Pancreas (tissue), 10 donors: ENCODE measurements at regions of chr5 and their contacts with region 1.

Region 1: GRCh38 chr5:124661317-124662141 is 84.9 kb downstream of the ZNF608 start:
- DNase-seq: peak in 4 of 6 donors; percentile 36 to 64 (median 50)
- ATAC-seq: peak; percentile 83 to 92 (median 86)
- H3K4me3 ChIP-seq: peak overlapping the region in 1 of 4 donors; percentile 3
- H3K27ac ChIP-seq: peak overlapping the region; percentile 41 to 85 (median 72)
- H3K4me1 ChIP-seq: peaks cover 55 to 76% (median 62%) of the 10 kb centered on the region in 3 donors
- H3K27me3 ChIP-seq: no peaks in the 10 kb centered on the region
- CTCF ChIP-seq: no peak

Region 2: DNA sequence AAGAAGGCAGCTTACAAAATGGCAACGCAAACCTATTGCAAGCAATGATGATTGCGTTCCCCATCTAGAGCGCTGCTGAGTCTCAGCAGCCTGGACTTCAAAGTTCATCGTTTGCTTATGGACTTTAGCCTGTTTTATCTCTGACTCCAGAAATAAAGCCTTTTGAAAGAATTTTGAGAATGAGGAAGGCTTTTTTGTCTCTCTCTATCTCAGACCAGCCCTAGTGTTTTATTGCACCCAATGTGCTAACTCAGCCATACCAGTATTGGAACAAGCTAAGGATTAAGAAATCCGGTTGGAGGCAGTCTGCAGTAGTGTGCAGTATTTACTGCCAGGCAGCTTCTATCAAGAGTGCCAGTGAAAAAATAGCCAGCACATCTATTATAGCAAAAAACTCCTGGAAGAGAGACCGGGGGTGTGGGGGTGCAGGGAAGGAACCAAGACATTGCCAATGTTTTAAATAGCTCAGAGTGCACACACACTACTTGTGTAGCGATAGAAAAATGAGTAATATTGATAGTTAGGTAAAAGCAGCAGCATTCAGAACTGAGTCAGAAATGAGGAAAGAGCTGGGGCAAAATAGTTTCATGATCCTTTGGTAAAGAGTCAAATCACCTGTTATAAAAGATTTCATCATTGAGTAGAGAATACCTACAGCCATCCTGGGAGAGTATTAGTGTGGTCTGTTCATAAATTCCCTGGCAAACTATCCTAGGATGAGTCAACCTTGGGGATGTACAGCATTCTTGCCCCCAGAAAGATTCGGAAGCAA is 134.1 kb before region 1 on chr5:
- intact Hi-C with region 1: no loop called
- DNase-seq: no peak
- ATAC-seq: peak; percentile 53 to 81 (median 79)
- H3K4me3 ChIP-seq: no peak overlapping the region
- H3K27ac ChIP-seq: peak overlapping the region in 1 of 4 donors; percentile 17
- H3K4me1 ChIP-seq: no peaks in the 10 kb centered on the region
- H3K27me3 ChIP-seq: no peaks in the 10 kb centered on the region
- CTCF ChIP-seq: no peak

Region 3: DNA sequence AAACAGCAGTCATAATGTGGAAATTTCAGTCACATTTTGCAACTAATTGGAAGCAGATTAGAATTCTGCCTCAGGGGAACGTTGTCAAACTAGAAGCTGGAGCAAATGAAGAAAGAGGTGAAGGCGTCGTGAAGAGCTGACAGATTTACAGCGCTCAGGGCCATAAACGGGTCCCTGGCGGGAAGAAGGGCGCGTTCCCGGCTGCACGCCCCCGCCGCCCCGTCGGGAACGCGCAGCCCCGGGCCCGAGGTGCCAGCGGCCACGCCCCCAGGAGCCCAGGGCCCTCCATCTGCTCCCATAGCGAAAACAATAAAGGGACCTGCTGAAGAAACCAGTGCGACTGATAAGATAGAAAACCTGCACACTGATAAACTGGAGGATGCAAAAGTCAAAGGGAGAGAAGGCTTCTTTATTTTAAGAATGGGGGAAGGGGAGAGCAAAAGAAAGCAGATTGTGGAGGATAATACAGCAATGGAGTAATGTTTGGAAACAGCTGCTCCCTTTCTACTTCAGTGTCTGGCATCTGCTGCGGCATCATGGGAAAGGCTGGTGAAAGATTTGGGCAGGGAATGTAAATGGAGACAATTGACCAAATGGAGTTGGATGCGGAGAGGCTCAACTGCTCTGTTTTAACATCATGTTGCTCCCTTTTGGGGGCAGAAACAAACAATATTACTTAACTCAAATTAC is 73.8 kb after region 1 on chr5:
- intact Hi-C with region 1: loop called in 1 of 3 experiments (anchors 10 kb)
- DNase-seq: peak in 3 of 6 donors; percentile 17 to 67 (median 38)
- ATAC-seq: peak; percentile 62 to 73 (median 68)
- H3K4me3 ChIP-seq: peak overlapping the region in 2 of 4 donors; percentile 32 to 33
- H3K27ac ChIP-seq: peak overlapping the region in 2 of 4 donors; percentile 32 to 72
- H3K4me1 ChIP-seq: peaks cover 27 to 73% (median 48%) of the 10 kb centered on the region in 3 donors
- H3K27me3 ChIP-seq: no peaks in the 10 kb centered on the region
- CTCF ChIP-seq: no peak